Activated T-helper 2 cell treated with anti-CD3 and anti-CD28 coated beads, Interferon-gamma antibody, Interleukin-2, Interleukin-4, amounts not matched to agents 10 μg/mL and 5 μg/mL and 100 μg/mL, durations not matched to agents 14 hours and 24 hours and 36 hours (primary cell): ENCODE measurements at regions of chr12 and their contacts with region 1.

Region 1: DNA sequence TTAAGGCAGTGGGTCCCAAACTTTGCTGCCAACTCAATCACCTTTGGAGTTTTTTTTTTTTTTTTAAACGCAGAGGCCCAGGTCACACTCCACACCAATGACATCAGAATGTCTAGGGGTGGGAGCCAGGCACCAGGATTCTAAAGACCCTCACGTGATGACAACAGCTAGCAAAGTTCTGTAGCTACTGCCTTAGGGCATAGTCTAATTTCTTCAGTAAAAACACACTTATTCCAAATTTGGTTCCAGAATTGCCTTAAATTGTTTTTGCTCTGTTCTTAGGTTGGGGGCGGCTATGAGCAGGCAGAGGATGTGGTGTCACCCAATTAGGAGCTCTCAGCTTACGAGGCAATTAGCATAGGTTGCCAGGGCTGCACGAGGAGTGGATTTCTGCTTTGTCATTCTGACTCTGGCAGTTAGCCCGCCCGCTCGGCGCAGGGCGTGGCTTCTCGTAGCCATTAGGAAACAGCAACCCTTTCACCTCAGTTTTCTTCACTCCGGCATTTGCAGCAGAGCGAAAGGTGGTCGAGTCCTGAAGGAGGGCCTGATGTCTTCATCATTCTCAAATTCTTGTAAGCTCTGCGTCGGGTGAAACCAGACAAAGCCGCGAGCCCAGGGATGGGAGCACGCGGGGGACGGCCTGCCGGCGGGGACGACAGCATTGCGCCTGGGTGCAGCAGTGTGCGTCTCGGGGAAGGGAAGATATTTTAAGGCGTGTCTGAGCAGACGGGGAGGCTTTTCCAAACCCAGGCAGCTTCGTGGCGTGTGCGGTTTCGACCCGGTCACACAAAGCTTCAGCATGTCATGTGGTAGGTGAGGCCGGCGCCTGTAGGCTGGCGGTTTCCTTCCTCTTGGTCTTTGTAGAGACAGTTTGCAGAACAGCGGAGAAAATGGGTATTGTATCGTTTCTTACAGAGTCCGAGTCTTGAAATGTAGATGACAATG is 16.7 kb upstream of the EID3 start:
- DNase-seq: peak; percentile 92
- H3K4me3 Mint-ChIP-seq: peak overlapping the region; percentile 100
- H3K27ac Mint-ChIP-seq: peak overlapping the region; percentile 100
- H3K4me1 Mint-ChIP-seq: peaks cover 24% of the 10 kb centered on the region
- H3K27me3 Mint-ChIP-seq: no peaks in the 10 kb centered on the region

Region 2: GRCh38 chr12:103956516-103957027 is 330.2 kb before region 1 on chr12:
- intact Hi-C with region 1: loop called (anchors 5 kb)
- DNase-seq: no peak
- H3K4me3 Mint-ChIP-seq: peak overlapping the region; percentile 96
- H3K27ac Mint-ChIP-seq: peak overlapping the region; percentile 97
- H3K4me1 Mint-ChIP-seq: peaks cover 40% of the 10 kb centered on the region
- H3K27me3 Mint-ChIP-seq: no peaks in the 10 kb centered on the region

Region 3: GRCh38 chr12:104137913-104138796 is 148.7 kb before region 1 on chr12 and contains the start of gene NFYB:
- intact Hi-C with region 1: loop called (anchors 1 kb)
- DNase-seq: peak; percentile 91
- H3K4me3 Mint-ChIP-seq: peak within 1 kb of the TSS; percentile 84
- H3K27ac Mint-ChIP-seq: peak within 1 kb of the TSS; percentile 86
- H3K4me1 Mint-ChIP-seq: peaks cover 17% of the 10 kb centered on the region
- H3K27me3 Mint-ChIP-seq: peaks cover 14% of the 10 kb centered on the region
- total RNA-seq, gene NFYB: 29.0 and 30.0 TPM in 2 replicates

Region 4: GRCh38 chr12:104303538-104304151 is 16.8 kb after region 1 on chr12 and contains the start of gene EID3:
- intact Hi-C with region 1: loop called (anchors 1 kb)
- DNase-seq: peak; percentile 91
- H3K4me3 Mint-ChIP-seq: peak within 1 kb of the TSS; percentile 90
- H3K27ac Mint-ChIP-seq: peak within 1 kb of the TSS; percentile 99
- H3K4me1 Mint-ChIP-seq: peaks cover 62% of the 10 kb centered on the region
- H3K27me3 Mint-ChIP-seq: no peaks in the 10 kb centered on the region
- total RNA-seq, gene EID3: 9.4 and 10.1 TPM in 2 replicates

Region 5: DNA sequence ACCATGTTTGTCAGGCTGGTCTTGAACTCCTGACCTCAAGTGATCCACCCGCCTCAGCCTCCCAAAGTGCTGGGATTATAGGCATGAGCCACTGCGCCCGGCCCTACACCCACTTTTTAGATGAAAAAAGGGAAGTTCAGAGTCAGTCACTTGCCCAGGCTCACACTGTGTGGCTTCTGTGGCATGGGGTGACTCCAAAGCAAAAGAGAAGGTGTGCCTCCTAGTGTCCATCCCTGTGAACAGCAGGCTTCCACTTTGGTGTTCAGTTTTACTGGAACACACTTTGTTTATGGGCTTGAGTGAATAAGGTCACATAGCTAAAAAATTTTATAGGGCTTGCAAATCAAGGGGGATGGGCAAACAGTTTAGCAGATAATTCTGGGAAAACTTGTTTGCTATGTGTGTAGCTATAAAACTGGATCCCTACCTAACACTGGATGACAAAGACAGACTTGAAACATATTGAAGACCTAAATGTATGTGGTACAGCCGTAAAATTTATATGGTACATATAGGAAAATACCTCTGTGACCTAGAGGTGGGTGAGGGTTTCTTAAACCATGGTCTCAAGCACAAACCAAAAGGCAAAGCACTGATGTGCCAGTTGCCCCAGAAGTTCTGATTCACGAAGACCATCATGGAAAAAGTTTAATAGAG is 71.7 kb after region 1 on chr12:
- intact Hi-C with region 1: loop called (anchors 5 kb)
- DNase-seq: peak; percentile 60
- H3K4me3 Mint-ChIP-seq: no peak overlapping the region
- H3K27ac Mint-ChIP-seq: no peak overlapping the region
- H3K4me1 Mint-ChIP-seq: peaks cover 8% of the 10 kb centered on the region
- H3K27me3 Mint-ChIP-seq: no peaks in the 10 kb centered on the region

Region 6: GRCh38 chr12:105330283-105330930 is 1043.6 kb after region 1 on chr12 and contains the start of gene C12orf75:
- intact Hi-C with region 1: loop called (anchors 2 kb)
- DNase-seq: peak; percentile 93
- H3K4me3 Mint-ChIP-seq: peak within 1 kb of the TSS; percentile 89
- H3K27ac Mint-ChIP-seq: peak within 1 kb of the TSS; percentile 97
- H3K4me1 Mint-ChIP-seq: peaks cover 66% of the 10 kb centered on the region
- H3K27me3 Mint-ChIP-seq: no peaks in the 10 kb centered on the region
- total RNA-seq, gene C12orf75: 246 and 252 TPM in 2 replicates